H1 (cell line): ENCODE measurements at regions of chr2 and their contacts with region 1.

Region 1: DNA sequence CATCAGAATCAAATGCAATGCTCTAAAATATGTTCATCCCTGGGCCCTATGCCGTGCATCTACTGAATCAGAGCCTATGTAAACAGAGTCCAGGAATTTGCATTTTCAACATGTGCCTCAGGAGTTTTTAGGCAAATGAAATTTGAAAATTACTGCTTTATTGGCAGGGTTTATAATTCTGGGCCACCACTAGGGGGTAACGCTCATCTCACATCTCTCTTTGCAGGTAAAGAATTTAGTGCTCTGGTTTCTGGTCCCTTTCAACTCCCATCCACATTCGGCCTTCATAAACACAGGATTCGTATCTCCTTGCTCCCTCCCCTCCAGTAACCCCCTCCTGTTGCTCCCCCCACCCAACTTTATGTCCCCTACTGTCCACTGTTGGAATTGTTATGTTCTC is 49.3 kb downstream of the LYPD6B start:
- DNase-seq: no peak
- H3K4me3 ChIP-seq: no peak overlapping the region
- H3K27ac ChIP-seq: no peak overlapping the region
- H3K4me1 ChIP-seq: peaks cover 0 to 4% (median 4%) of the 10 kb centered on the region in 4 experiments; a peak in 4 of 7 replicates
- H3K27me3 ChIP-seq: no peaks in the 10 kb centered on the region
- CTCF ChIP-seq: peak in 2 of 3 experiments; percentile 47 to 63; a peak in 3 of 4 replicates
- EP300 ChIP-seq: no peak
- POLR2A ChIP-seq: no peak
- RAD21 ChIP-seq: peak; percentile 48 to 68

Region 2: DNA sequence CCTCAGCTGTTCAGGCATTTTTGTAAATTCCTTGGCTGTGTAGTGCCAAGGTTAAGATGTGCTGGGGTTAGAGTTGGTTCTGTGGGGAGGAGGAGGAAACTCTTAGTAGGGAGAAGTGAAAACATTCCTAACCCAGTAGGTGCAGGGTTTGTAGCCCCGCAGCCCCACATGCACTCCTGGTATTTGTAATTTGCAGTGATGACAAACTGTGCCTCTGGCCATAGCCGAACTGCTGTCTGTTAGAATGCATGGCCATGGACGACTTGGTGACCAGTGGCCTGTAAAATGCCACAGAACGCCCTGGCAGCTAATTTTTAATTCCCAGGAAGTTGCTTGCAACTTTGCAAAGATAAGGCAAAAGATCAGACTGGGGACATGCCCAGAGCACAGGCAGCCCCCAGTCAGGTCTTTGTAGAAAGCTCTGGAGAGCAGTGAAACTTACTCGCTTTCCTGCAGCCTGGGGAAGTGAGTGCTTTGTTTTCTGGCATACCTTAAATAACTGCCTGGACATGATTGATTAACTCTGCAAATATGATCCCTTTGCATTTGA is 10.8 kb before region 1 on chr2:
- CTCF ChIA-PET with region 1: interaction called, 20 read pairs
- POLR2A ChIA-PET with region 1: no interaction called
- DNase-seq: peak; percentile 15 to 55
- H3K4me3 ChIP-seq: peak overlapping the region in 1 of 4 experiments; percentile 38; a peak in 2 of 8 replicates
- H3K27ac ChIP-seq: peak overlapping the region; percentile 38; the same call in 1 of the 2 replicates
- H3K4me1 ChIP-seq: peaks cover 6 to 21% (median 14%) of the 10 kb centered on the region in 4 experiments; a peak in 6 of 7 replicates
- H3K27me3 ChIP-seq: no peaks in the 10 kb centered on the region; a peak in 1 of 7 replicates
- CTCF ChIP-seq: no peak
- EP300 ChIP-seq: no peak
- POLR2A ChIP-seq: no peak
- RAD21 ChIP-seq: no peak

Region 3: GRCh38 chr2:149098701-149099100 is 10.9 kb after region 1 on chr2:
- CTCF ChIA-PET with region 1: interaction called, 24 read pairs
- POLR2A ChIA-PET with region 1: no interaction called
- DNase-seq: no peak
- H3K4me3 ChIP-seq: no peak overlapping the region
- H3K27ac ChIP-seq: no peak overlapping the region
- H3K4me1 ChIP-seq: no peaks in the 10 kb centered on the region
- H3K27me3 ChIP-seq: no peaks in the 10 kb centered on the region
- CTCF ChIP-seq: no peak
- EP300 ChIP-seq: no peak
- POLR2A ChIP-seq: no peak
- RAD21 ChIP-seq: no peak